ENCODE measurements at regions of chr16 and their contacts with region 1.

Region 1: GRCh38 chr16:87636072-87636684 is 33.9 kb downstream of the JPH3 start:
- DNase-seq: peak; percentile 43 to 88
- H3K4me3 ChIP-seq: no peak overlapping the region
- H3K27ac ChIP-seq: no peak overlapping the region
- H3K4me1 ChIP-seq: peaks cover 0 to 4% (median 2%) of the 10 kb centered on the region in 4 experiments; a peak in 4 of 7 replicates
- H3K27me3 ChIP-seq: no peaks in the 10 kb centered on the region; a peak in 2 of 7 replicates
- CTCF ChIP-seq: peak; percentile 84 to 91 (median 87)
- EP300 ChIP-seq: no peak
- POLR2A ChIP-seq: no peak
- RAD21 ChIP-seq: peak; percentile 89 to 91

Region 2: DNA sequence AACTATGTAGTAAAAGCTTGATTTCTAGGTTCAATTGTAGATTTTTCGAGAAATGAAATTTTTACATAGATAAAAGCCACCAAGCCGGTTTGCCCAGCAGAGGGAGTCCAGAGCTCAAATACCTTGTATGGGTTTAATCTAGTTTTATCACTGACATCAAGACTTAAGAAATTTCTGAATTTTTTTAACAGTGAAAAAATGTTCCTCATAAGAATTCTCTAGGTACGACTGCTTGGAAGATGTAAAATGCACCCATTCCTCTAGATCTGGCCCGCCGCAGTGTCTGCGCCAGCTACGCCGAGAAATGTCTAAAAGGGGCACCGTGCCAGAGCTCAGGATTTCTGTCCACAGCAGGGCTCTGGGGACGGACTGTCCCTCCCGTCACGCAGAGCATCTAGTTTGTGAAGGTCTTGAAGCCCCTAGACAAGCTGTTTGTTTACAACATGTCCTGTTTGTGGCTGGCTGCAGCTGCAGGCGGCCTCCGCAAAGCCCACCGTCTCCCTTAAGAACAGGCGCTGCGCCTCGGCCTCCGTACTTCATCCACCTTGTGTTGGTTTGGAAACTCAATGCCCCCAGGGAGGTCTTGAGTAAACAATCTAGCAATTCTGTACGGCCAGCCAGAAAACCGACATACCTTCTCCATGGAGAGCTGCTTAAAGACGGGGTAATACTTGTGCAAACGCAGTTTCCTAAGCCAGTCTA is 219.2 kb before region 1 on chr16:
- CTCF ChIA-PET with region 1: interaction called, 10 read pairs
- POLR2A ChIA-PET with region 1: no interaction called
- DNase-seq: no peak
- H3K4me3 ChIP-seq: no peak overlapping the region
- H3K27ac ChIP-seq: no peak overlapping the region
- H3K4me1 ChIP-seq: no peaks in the 10 kb centered on the region
- H3K27me3 ChIP-seq: no peaks in the 10 kb centered on the region
- CTCF ChIP-seq: peak in 1 of 3 experiments; percentile 27; a peak in 2 of 4 replicates
- EP300 ChIP-seq: no peak
- POLR2A ChIP-seq: no peak
- RAD21 ChIP-seq: peak; percentile 26 to 40; a peak in 3 of 4 replicates

Region 3: DNA sequence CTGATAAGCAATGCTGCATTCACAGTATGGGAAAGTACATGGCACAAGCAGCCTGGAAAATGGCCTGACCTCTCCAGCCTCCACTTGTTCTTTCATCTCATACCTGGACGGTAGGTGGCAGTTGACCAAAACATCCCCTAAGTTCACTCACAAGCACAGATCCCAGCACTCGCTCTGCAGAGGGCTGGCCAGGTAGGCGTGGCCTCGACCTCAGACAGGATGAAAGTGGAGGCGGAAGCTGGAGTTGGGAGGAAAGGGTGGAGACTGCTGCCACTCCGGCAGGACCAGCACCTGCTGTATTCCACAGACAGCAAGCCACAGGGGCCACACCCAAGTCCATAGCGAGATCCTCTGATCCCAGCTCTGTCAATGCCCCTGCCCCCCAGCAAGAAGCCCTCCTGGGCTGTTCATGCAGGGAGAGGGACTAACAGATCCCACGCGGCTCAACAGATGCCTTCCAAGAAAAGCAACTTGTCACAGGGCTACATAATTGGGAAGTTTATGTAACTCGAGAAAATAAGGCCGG is 174.6 kb before region 1 on chr16:
- CTCF ChIA-PET with region 1: interaction called, 12 read pairs
- POLR2A ChIA-PET with region 1: interaction called, 3 read pairs
- DNase-seq: peak; percentile 87
- H3K4me3 ChIP-seq: peak overlapping the region in 2 of 4 experiments; percentile 24 to 26; a peak in 4 of 8 replicates
- H3K27ac ChIP-seq: no peak overlapping the region
- H3K4me1 ChIP-seq: peaks cover 2 to 4% (median 3%) of the 10 kb centered on the region in 4 experiments; a peak in 6 of 7 replicates
- H3K27me3 ChIP-seq: no peaks in the 10 kb centered on the region
- CTCF ChIP-seq: peak; percentile 62 to 92 (median 65)
- EP300 ChIP-seq: no peak
- POLR2A ChIP-seq: no peak
- RAD21 ChIP-seq: peak; percentile 58 to 69

Region 4: GRCh38 chr16:87581833-87582203 is 54.4 kb before region 1 on chr16:
- CTCF ChIA-PET with region 1: interaction called, 231 read pairs
- POLR2A ChIA-PET with region 1: interaction called, 6 read pairs
- DNase-seq: no peak
- H3K4me3 ChIP-seq: no peak overlapping the region
- H3K27ac ChIP-seq: no peak overlapping the region
- H3K4me1 ChIP-seq: peaks cover 1 to 15% (median 8%) of the 10 kb centered on the region in 4 experiments
- H3K27me3 ChIP-seq: 0 out of 7 replicates have a peak, but pooled peaks cover 0 to 2% (median 0%) of the 10 kb centered on the region in 4 experiments
- CTCF ChIP-seq: no peak
- EP300 ChIP-seq: no peak
- POLR2A ChIP-seq: no peak
- RAD21 ChIP-seq: no peak

Region 5: GRCh38 chr16:87608400-87608985 is 27.7 kb before region 1 on chr16:
- CTCF ChIA-PET with region 1: interaction called, 39 read pairs
- POLR2A ChIA-PET with region 1: interaction called, 3 read pairs
- DNase-seq: peak in 1 of 2 experiments; percentile 90
- H3K4me3 ChIP-seq: no peak overlapping the region
- H3K27ac ChIP-seq: no peak overlapping the region
- H3K4me1 ChIP-seq: peaks cover 0 to 7% (median 4%) of the 10 kb centered on the region in 4 experiments; a peak in 5 of 7 replicates
- H3K27me3 ChIP-seq: peaks cover 0 to 6% (median 0%) of the 10 kb centered on the region in 4 experiments; a peak in 2 of 7 replicates
- CTCF ChIP-seq: no peak
- EP300 ChIP-seq: no peak
- POLR2A ChIP-seq: no peak
- RAD21 ChIP-seq: no peak

Region 6: DNA sequence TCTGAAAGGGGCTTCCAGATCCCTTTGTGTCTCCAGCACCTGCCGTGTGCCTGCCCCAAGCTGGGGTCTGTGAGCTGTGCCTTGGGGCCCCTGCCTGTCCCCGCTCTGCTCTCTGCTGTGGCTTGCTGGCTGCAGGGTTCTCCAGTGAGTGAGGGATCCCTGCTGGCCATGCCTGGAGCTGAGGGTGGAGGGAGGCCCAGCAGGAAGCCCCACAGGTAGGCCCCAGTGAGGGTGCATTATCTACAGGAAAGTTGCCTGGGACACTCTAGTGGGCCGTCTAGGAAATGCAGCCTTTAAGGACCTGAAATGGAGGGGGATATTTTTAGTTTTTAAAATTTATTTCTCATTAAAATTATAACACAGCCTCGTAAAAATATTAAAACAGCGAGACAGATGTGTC is 17.1 kb after region 1 on chr16:
- CTCF ChIA-PET with region 1: interaction called, 41 read pairs
- POLR2A ChIA-PET with region 1: no interaction called
- DNase-seq: no peak
- H3K4me3 ChIP-seq: no peak overlapping the region
- H3K27ac ChIP-seq: no peak overlapping the region
- H3K4me1 ChIP-seq: peaks cover 0 to 19% (median 4%) of the 10 kb centered on the region in 4 experiments; a peak in 4 of 7 replicates
- H3K27me3 ChIP-seq: no peaks in the 10 kb centered on the region
- CTCF ChIP-seq: peak; percentile 14 to 48 (median 33)
- EP300 ChIP-seq: no peak
- POLR2A ChIP-seq: no peak
- RAD21 ChIP-seq: peak; percentile 27 to 33; a peak in 3 of 4 replicates

Region 7: DNA sequence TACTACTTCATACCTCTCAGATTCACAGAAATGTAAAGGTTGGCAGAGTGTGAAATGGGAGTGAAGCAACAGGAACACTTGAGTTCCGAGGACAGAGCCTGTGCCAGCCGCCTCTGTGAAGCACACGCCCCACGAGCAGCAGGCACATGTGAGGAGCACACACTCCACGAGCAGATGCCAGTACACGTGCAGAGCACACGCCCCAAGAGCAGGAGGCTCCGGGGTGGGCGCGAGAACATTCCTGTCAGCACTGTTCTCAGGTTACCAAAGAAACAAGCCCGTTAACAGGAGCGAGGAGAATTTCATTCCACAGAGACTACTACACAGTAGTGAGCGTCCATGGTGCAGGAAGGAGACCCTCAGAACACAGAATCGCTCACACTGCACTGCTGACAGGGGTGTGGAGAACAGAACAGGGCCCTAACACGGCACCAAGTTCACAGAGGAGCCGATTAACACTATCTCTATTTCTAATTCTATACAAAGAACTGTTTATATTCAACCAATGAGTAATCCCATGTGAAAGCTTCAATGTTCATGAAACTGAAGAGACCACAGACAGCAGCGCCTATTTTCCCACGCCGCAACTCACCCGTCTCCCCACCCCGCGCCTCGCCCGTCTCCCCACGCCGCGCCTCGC is 89.5 kb after region 1 on chr16:
- CTCF ChIA-PET with region 1: no interaction called
- POLR2A ChIA-PET with region 1: no interaction called
- DNase-seq: no peak
- H3K4me3 ChIP-seq: no peak overlapping the region
- H3K27ac ChIP-seq: no peak overlapping the region
- H3K4me1 ChIP-seq: no peaks in the 10 kb centered on the region
- H3K27me3 ChIP-seq: no peaks in the 10 kb centered on the region
- CTCF ChIP-seq: no peak
- EP300 ChIP-seq: no peak
- POLR2A ChIP-seq: no peak
- RAD21 ChIP-seq: no peak

Measured in H1 (cell line).